Endothelial cell of umbilical vein (primary cell): ENCODE measurements at regions of chr14 and their contacts with region 1.

Region 1: DNA sequence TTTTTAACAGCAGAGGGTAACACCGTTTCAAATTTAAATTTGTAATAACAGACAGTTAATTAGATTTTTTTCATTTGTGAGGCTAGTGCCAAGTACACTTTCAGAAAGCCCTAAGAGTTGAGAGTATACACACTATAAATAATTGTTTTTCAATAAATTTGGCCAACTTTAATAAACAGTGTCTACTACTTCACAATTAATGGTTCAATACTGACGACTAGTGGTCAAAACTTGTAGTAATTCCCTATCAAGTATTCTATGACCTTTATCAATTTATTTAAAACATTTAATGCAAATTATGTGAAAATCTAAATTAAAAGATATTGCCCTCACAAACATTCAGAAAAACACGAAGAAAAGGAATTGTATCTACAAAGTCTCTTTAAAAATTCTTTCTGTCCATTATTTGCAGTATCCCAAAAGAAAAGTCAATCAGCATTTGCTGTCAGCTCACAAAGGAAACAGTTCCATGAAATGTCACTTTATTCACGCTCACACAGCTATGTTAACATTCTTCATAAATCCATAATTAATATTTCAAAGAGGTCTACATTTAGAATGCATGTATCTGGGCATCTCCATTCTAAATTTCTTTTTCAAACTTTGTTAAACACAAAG is 91.2 kb downstream of the CEP128 start:
- DNase-seq: peak; percentile 63
- H3K4me3 ChIP-seq: no peak overlapping the region
- H3K27ac ChIP-seq: no peak overlapping the region
- H3K4me1 ChIP-seq: no peaks in the 10 kb centered on the region
- H3K27me3 ChIP-seq: no peaks in the 10 kb centered on the region
- CTCF ChIP-seq: peak; percentile 22 to 23
- POLR2A ChIP-seq: no peak

Region 2: DNA sequence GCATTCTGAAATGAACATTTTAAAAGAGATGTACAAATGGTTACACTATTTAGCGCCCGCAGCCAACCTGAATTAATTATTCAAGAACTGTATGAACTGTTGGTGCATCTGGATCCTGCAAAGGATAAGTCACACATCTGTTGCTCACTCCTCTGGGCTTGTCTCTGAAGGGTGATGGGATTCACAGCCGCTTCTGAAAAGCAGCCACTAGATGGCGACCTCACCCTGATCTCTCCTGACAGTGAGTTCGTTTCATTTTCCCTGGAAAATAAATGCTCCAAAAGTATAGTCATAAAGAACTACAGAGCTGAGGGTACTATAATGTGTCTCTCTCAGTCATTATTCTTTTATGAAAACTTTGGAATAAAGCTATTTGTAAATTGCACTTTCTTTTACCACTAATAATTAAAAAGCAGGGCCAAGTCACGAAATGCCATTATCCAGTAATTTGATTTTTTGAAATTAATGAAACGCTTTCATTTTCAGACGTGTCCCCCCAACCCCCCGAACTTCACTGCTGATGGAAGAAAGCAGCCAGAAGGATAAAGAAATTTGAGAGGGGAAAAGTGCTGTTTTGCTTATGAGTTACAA is 1890.5 kb before region 1 on chr14:
- CTCF ChIA-PET with region 1: interaction called, 9 read pairs
- POLR2A ChIA-PET with region 1: interaction called, 4 read pairs
- dilution Hi-C with region 1: no loop called
- intact Hi-C with region 1: loop called (anchors 2 kb)
- DNase-seq: peak; percentile 74
- H3K4me3 ChIP-seq: no peak overlapping the region
- H3K27ac ChIP-seq: no peak overlapping the region
- H3K4me1 ChIP-seq: peaks cover 12% of the 10 kb centered on the region
- H3K27me3 ChIP-seq: no peaks in the 10 kb centered on the region
- CTCF ChIP-seq: peak; percentile 84 to 87
- POLR2A ChIP-seq: no peak

Region 3: DNA sequence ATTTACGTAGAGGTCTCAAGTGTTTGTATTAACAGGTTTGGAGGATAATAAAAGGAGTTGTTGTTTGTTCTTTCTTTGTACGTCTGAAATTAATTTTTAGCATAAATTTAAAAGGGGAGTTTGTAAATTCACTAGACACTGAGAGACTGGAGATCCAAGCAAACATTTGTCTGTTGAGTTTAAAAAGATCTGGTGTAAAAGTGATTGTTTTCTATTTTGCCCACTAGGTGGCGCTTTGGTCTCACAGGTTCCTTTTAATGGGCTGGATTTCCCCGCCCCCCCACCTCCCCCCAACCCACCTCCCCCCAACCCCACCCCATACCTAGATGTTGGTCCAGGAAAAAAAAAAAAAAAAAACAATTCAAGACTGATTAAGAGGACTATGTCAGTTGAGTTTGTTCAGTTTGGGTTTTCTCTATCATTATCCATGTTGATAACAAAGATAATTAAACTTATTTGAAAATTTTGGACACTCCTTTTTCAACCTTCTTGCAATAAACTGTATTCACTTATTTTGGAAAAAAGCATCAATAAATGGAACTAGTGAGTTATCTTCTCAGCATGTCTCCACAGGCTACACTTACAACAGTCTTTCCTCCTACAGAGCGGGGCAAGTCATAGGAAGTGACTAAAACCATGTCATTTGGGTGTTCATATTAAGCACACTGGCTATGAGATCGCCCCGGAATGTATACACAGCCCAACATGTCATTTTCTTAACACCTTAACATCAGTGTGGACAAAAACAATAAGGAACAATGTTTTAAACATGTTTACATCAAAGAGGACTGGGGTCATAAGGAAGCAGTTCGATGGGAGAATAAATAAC is 1839.0 kb before region 1 on chr14:
- CTCF ChIA-PET with region 1: interaction called, 4 read pairs
- POLR2A ChIA-PET with region 1: no interaction called
- dilution Hi-C with region 1: no loop called
- intact Hi-C with region 1: loop called (anchors 1 kb)
- DNase-seq: peak; percentile 76
- H3K4me3 ChIP-seq: no peak overlapping the region
- H3K27ac ChIP-seq: peak overlapping the region; percentile 63
- H3K4me1 ChIP-seq: peaks cover 11% of the 10 kb centered on the region
- H3K27me3 ChIP-seq: no peaks in the 10 kb centered on the region
- CTCF ChIP-seq: peak in 1 of 2 donors; percentile 42
- POLR2A ChIP-seq: no peak

Region 4: GRCh38 chr14:80055667-80056496 is 794.4 kb before region 1 on chr14:
- CTCF ChIA-PET with region 1: interaction called, 54 read pairs
- POLR2A ChIA-PET with region 1: no interaction called
- dilution Hi-C with region 1: no loop called
- intact Hi-C with region 1: loop called (anchors 1 kb)
- DNase-seq: peak; percentile 47
- H3K4me3 ChIP-seq: no peak overlapping the region
- H3K27ac ChIP-seq: no peak overlapping the region
- H3K4me1 ChIP-seq: no peaks in the 10 kb centered on the region
- H3K27me3 ChIP-seq: no peaks in the 10 kb centered on the region
- CTCF ChIP-seq: peak; percentile 46 to 61
- POLR2A ChIP-seq: no peak

Region 5: GRCh38 chr14:80213599-80213998 is 636.7 kb before region 1 on chr14:
- CTCF ChIA-PET with region 1: interaction called, 88 read pairs
- POLR2A ChIA-PET with region 1: no interaction called
- dilution Hi-C with region 1: no loop called
- intact Hi-C with region 1: loop called (anchors 1 kb)
- DNase-seq: peak; percentile 39
- H3K4me3 ChIP-seq: no peak overlapping the region
- H3K27ac ChIP-seq: no peak overlapping the region
- H3K4me1 ChIP-seq: no peaks in the 10 kb centered on the region
- H3K27me3 ChIP-seq: peaks cover 0 to 2% of the 10 kb centered on the region in 2 experiments
- CTCF ChIP-seq: peak; percentile 43 to 55
- POLR2A ChIP-seq: no peak

Region 6: DNA sequence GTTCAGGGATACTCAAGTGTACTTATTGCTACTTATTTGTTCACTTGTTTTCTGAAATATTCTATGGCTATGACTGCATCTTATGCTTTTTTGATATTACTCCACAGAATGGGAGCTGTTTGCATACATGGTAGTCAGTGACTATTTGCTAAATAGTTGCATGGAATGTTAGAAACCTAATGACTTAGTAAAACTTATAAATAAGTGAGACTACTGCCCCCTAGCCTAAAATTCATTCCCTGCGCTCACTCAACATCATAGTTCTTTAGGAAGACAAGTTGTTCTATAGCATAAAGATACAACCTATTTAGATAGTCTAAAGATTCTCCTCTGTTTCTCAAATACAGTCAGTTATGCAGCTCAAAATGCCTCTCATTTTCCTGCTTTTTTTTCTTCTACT is 214.2 kb before region 1 on chr14:
- CTCF ChIA-PET with region 1: interaction called, 3 read pairs
- POLR2A ChIA-PET with region 1: no interaction called
- dilution Hi-C with region 1: no loop called
- intact Hi-C with region 1: loop called (anchors 5 kb)
- DNase-seq: no peak
- H3K4me3 ChIP-seq: no peak overlapping the region
- H3K27ac ChIP-seq: no peak overlapping the region
- H3K4me1 ChIP-seq: peaks cover 38% of the 10 kb centered on the region
- H3K27me3 ChIP-seq: no peaks in the 10 kb centered on the region
- CTCF ChIP-seq: peak in 1 of 2 donors; percentile 11
- POLR2A ChIP-seq: no peak

Region 7: DNA sequence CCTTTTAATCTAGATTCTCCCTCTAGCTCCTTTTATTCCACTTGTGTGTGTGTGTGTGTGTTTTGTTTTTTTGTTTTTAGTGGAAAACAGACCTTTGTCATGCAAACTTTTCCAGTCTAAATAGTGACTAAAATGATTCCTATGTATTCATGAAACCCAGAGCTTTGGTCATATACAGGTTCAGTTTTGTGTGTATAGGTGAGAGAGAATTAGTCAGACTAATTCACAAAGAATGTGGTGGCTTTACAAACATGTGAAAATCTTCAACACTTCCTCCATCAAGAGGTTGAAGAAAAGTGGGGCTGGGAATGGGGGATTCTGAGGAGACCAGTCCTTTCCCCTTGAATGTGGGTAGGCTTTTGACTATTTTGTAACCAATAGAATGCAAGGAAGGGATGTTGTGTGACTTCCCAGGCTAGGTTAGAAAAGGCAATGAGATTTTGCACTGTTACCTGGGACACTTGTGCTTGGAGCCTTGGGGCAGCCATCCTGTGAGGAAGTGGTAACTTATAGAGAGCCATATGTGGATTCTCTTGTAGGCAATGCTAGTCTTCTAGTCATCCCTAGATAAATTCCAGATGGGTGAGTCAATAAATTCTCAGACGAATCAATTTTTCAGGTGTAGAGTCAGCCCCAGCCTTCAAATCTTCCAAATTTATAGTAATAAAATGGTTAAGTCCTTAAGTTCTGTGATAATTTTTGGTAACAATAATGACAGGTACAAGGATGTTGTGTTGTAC is 144.9 kb before region 1 on chr14:
- CTCF ChIA-PET with region 1: no interaction called
- POLR2A ChIA-PET with region 1: no interaction called
- dilution Hi-C with region 1: no loop called
- intact Hi-C with region 1: no loop called
- DNase-seq: no peak
- H3K4me3 ChIP-seq: no peak overlapping the region
- H3K27ac ChIP-seq: no peak overlapping the region
- H3K4me1 ChIP-seq: no peaks in the 10 kb centered on the region
- H3K27me3 ChIP-seq: no peaks in the 10 kb centered on the region
- CTCF ChIP-seq: no peak
- POLR2A ChIP-seq: no peak

Region 8: DNA sequence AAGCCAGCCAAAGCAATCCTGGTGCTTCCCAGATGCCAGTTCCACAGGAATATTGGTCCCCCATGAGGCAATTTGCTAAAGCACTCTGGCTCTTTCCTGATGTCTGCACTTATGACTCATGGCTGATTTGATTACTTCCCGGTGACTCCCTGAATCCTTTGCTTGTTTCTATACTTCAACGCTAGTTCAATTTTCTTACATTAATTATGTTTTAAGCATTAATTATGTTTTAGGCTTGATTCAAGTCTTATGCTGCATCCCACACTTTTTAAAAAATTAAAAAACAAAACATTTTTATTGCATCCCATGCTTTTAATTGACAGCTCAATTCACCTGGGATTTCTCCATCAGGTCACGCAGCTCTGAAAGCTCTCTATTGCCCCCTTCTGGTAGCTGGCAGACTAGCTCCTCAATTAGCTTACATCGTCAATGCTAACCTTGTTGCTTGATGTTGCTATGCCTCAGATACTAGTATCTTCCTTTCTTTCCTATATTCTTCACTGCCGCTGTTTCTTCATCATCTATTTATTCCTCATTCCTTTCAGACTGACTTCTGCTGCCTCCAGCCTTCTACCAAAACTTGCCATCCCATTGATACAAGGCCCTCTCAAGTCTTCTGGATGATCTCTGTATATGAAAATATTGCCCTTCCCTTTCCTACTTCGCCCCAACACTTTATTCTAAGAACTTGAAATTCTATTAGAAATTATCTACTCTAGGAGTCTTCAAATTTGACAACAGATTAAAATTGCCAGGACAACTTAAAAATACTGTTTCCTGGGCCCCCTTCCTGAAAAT is 137.1 kb after region 1 on chr14:
- CTCF ChIA-PET with region 1: interaction called, 7 read pairs
- POLR2A ChIA-PET with region 1: no interaction called
- dilution Hi-C with region 1: no loop called
- intact Hi-C with region 1: loop called (anchors 5 kb)
- DNase-seq: peak; percentile 73
- H3K4me3 ChIP-seq: no peak overlapping the region
- H3K27ac ChIP-seq: no peak overlapping the region
- H3K4me1 ChIP-seq: no peaks in the 10 kb centered on the region
- H3K27me3 ChIP-seq: peaks cover 0 to 9% of the 10 kb centered on the region in 2 experiments
- CTCF ChIP-seq: peak; percentile 76 to 89
- POLR2A ChIP-seq: no peak